Caco-2 (cell line): ENCODE measurements at regions of chr19 and their contacts with region 1.

Region 1: GRCh38 chr19:5967994-5968430 is 9.9 kb downstream of the RANBP3 start:
- DNase-seq: peak; percentile 68 to 69
- H3K4me3 ChIP-seq: no peak overlapping the region
- H3K4me3 Mint-ChIP-seq: no peak overlapping the region
- H3K27ac Mint-ChIP-seq: peak overlapping the region; percentile 16
- H3K4me1 ChIP-seq: peaks cover 10% of the 10 kb centered on the region
- H3K4me1 Mint-ChIP-seq: peaks cover 19% of the 10 kb centered on the region
- H3K27me3 ChIP-seq: no peaks in the 10 kb centered on the region
- H3K27me3 Mint-ChIP-seq: no peaks in the 10 kb centered on the region
- CTCF ChIP-seq: peak; percentile 68 to 91

Region 2: DNA sequence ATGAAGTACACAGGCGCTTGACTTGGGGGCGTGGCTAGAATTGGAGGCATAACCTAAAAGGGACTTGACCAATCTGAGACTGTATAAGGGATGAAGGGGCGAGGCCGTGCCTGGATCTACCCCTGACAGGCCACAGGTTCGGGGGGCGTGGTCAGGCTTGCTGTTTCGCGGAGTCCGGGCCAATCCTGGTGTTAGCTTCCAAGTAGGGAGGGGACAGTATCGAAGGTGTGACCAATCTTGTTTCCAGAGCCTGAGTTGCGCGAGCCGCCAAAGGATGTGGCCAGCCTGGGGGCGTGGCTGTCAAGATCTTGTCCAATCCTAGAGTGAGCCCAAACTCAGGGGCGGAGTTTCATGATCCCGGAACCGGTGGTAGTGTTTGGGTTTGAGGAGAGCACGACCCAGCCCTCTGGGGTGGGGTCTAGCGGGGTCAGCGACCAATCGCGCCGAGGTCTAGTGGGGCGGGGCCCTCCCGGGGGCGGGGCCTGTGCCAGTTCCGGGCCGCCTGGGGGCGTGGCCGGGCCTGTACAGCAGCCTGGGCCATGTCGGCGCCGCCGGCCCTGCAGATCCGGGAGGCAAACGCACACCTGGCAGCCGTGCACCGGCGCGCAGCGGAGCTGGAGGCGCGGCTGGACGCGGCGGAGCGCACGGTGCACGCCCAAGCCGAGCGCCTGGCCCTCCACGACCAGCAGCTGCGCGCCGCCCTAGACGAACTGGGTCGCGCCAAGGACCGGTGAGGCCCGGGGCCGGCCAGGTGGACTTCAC is 63.5 kb before region 1 on chr19 and contains the start of gene VMAC:
- CTCF ChIA-PET with region 1: interaction called, 12 read pairs
- POLR2A ChIA-PET with region 1: no interaction called
- intact Hi-C with region 1: no loop called
- DNase-seq: peak; percentile 99 to 100
- H3K4me3 ChIP-seq: peak within 1 kb of the TSS; percentile 86
- H3K4me3 Mint-ChIP-seq: peak within 1 kb of the TSS; percentile 82
- H3K27ac Mint-ChIP-seq: peak within 1 kb of the TSS; percentile 97
- H3K4me1 ChIP-seq: no peaks in the 10 kb centered on the region; the same call in 1 of the 2 replicates
- H3K4me1 Mint-ChIP-seq: no peaks in the 10 kb centered on the region
- H3K27me3 ChIP-seq: no peaks in the 10 kb centered on the region
- H3K27me3 Mint-ChIP-seq: no peaks in the 10 kb centered on the region
- CTCF ChIP-seq: no peak
- total RNA-seq, gene VMAC: 4.7 and 4.8 TPM in 2 replicates

Region 3: DNA sequence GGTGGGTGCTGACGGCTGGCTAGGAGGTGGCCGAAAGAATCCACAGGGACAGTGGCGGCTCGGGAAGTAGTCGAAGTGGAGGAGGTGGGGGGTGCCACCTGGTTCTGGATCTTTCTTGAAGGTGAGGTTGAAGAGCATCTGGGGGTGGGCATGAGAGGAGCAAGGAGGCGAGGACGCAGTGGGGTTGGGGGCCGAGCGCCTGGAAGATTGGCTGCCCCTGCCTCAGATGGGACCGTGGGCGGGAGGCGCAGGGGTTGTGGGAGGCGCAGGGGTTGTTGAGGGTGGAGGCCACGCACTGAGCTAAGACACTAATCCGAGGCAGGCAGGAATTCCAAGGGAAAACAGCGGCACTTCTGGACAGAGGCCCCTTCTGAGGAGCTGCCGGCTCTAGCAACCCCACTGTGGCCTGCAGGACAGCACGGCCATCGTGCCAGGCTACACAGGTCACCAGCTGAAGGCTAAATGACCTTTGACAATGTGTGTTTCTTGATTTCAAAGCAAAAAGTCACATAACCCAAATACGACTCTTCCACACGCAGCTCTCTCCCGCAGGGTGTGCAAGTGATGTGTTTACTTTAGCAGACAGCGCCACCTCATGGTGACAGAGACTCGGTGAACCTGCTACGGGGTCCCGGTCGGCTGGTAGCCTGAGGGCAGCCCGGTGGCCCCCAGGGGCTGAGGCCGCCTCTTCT is 54.0 kb after region 1 on chr19:
- CTCF ChIA-PET with region 1: interaction called, 10 read pairs
- POLR2A ChIA-PET with region 1: no interaction called
- intact Hi-C with region 1: no loop called
- DNase-seq: peak; percentile 65
- H3K4me3 ChIP-seq: no peak overlapping the region
- H3K4me3 Mint-ChIP-seq: no peak overlapping the region
- H3K27ac Mint-ChIP-seq: no peak overlapping the region
- H3K4me1 ChIP-seq: peaks cover 3% of the 10 kb centered on the region
- H3K4me1 Mint-ChIP-seq: no peaks in the 10 kb centered on the region
- H3K27me3 ChIP-seq: no peaks in the 10 kb centered on the region
- H3K27me3 Mint-ChIP-seq: no peaks in the 10 kb centered on the region
- CTCF ChIP-seq: peak; percentile 63 to 67